CD8-positive, alpha-beta memory T cell (primary cell): ENCODE measurements at regions of chr15 and their contacts with region 1.

Region 1: GRCh38 chr15:73287019-73287418 is 81.7 kb downstream of the HCN4 start:
- DNase-seq: no peak
- H3K4me3 ChIP-seq: no peak overlapping the region
- H3K4me3 Mint-ChIP-seq: no peak overlapping the region
- H3K27ac ChIP-seq: no peak overlapping the region
- H3K27ac Mint-ChIP-seq: no peak overlapping the region
- H3K4me1 ChIP-seq: no peaks in the 10 kb centered on the region
- H3K4me1 Mint-ChIP-seq: no peaks in the 10 kb centered on the region
- H3K27me3 ChIP-seq: no peaks in the 10 kb centered on the region
- H3K27me3 Mint-ChIP-seq: no peaks in the 10 kb centered on the region

Region 2: DNA sequence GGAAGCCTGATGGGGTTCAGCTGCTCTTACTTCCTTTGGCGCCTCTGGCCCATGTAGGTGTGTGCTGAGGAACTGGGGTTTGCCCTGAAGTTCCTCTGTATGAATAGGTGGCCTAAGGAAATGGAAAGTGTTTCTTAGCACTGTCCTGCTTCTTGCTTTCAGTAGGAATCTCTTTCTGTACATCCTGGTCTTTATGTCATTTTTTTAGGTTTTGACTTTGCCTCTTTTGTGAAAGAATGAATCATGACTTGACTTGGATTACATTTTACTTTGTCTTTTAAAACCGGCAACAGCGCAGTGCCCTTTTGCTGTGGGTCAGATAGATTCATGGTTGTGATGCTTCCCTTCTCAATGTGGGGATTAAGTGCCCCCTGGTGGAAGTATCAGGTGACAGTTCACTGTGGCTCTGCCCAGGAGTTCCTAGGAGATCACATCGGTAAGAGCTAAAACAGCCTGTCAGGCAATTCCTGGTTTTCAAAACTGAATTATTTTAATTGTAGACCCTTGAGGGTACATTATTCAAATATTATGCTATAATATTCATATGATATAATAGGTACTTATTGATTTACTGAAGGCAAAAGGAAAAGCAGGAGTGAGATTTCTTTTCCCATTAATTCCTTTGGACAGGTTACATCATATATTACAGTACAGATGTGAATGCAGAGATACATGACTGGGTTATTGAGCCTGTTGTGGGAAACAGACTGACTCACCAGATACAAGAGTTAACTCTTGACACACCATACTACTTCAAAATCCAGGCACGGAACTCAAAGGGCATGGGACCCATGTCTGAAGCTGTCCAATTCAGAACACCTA is 13.6 kb before region 1 on chr15:
- CTCF ChIA-PET with region 1: interaction called, 15 read pairs
- POLR2A ChIA-PET with region 1: no interaction called
- DNase-seq: peak in 4 of 5 donors; percentile 17 to 56 (median 22)
- H3K4me3 ChIP-seq: no peak overlapping the region
- H3K4me3 Mint-ChIP-seq: peak overlapping the region in 2 of 7 donors; percentile 20 to 22
- H3K27ac ChIP-seq: no peak overlapping the region
- H3K27ac Mint-ChIP-seq: peak overlapping the region in 1 of 8 donors; percentile 58
- H3K4me1 ChIP-seq: no peaks in the 10 kb centered on the region
- H3K4me1 Mint-ChIP-seq: peaks cover 0 to 3% (median 2%) of the 10 kb centered on the region in 3 donors
- H3K27me3 ChIP-seq: no peaks in the 10 kb centered on the region
- H3K27me3 Mint-ChIP-seq: no peaks in the 10 kb centered on the region

Region 3: DNA sequence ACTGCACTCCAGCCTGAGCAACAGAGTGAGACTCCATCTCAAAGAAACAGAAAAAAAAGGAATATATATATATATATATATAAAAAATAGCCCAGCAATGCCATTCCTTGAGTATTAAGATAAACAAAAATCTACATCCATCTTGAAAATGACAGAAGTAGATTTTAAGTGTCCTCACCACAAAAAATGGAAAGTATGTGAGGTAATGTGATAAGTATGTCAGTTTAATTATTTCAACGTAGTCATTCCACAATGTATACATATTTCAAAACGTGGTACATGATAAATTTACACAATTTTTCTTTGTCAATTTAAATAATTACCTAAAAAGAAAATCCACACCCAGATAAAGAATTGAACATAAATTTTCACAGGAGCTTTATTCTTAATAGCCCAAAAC is 26.8 kb after region 1 on chr15:
- CTCF ChIA-PET with region 1: no interaction called
- POLR2A ChIA-PET with region 1: no interaction called
- DNase-seq: no peak
- H3K4me3 ChIP-seq: no peak overlapping the region
- H3K4me3 Mint-ChIP-seq: no peak overlapping the region
- H3K27ac ChIP-seq: no peak overlapping the region
- H3K27ac Mint-ChIP-seq: no peak overlapping the region
- H3K4me1 ChIP-seq: no peaks in the 10 kb centered on the region
- H3K4me1 Mint-ChIP-seq: no peaks in the 10 kb centered on the region
- H3K27me3 ChIP-seq: no peaks in the 10 kb centered on the region
- H3K27me3 Mint-ChIP-seq: peaks cover 6 to 17% of the 10 kb centered on the region in 2 donors

Region 4: GRCh38 chr15:73633111-73633990 is 346.3 kb after region 1 on chr15 and contains the start of gene NPTN:
- CTCF ChIA-PET with region 1: no interaction called
- POLR2A ChIA-PET with region 1: no interaction called
- DNase-seq: peak; percentile 97 to 98 (median 98)
- H3K4me3 ChIP-seq: peak within 1 kb of the TSS; percentile 75
- H3K4me3 Mint-ChIP-seq: peak within 1 kb of the TSS; percentile 88 to 95 (median 91)
- H3K27ac ChIP-seq: peak within 1 kb of the TSS; percentile 63
- H3K27ac Mint-ChIP-seq: peak within 1 kb of the TSS; percentile 17 to 94 (median 88)
- H3K4me1 ChIP-seq: peaks cover 45% of the 10 kb centered on the region
- H3K4me1 Mint-ChIP-seq: peaks cover 42 to 54% (median 53%) of the 10 kb centered on the region in 3 donors
- H3K27me3 ChIP-seq: no peaks in the 10 kb centered on the region
- H3K27me3 Mint-ChIP-seq: peaks cover 12 to 16% of the 10 kb centered on the region in 2 donors
- total RNA-seq, gene NPTN: 55.8 to 58.5 TPM